HEK293 (cell line): ENCODE measurements at regions of chr18 and their contacts with region 1.

Region 1: GRCh38 chr18:50203801-50204604 is 9.1 kb upstream of the MYO5B start:
- H3K4me3 ChIP-seq: no peak overlapping the region
- H3K27ac ChIP-seq: no peak overlapping the region
- H3K4me1 ChIP-seq: no peaks in the 10 kb centered on the region
- CTCF ChIP-seq: peak; percentile 83

Region 2: DNA sequence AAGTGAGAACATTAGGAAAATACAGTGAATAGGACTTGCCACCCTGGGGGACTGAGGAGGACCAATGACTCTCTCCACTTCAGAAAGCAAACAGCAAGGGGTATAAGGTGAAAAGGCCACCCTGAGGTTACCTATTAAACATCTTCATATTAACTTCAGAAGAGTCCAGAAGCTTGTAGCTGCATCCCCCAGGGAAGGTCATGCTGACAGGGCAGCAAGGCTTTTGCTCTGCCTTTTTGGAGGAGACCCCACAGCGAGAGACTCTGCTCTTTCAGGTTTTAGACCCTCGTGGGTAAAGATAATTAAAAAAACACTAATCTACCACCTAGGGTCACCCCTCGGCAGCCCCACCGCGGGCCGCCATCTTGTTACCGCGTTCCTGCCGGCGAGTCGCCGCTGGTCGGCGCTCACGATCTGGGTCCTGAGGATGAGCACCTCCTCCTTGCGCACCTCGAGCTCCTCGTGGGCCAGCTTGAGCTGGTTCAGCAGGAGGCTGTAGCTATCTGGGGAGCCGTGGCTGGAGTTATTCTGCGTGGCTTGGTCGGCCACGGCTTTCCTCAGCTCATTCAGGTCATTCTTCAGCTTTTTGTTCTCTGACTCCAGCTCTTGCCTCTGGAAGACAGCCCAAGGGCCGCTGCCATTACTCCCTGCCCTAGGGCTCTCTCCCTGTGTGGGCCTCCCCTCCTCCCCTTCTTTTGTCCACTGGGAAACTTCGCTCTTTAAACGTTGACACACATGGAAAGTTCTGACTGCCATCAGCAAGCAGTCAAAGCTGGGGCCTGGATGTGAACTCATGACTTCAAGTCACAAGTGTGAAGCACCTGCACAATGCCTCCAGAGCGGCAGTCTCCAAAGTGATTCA is 340.0 kb before region 1 on chr18:
- CTCF ChIA-PET with region 1: interaction called, 30 read pairs
- POLR2A ChIA-PET with region 1: no interaction called
- H3K4me3 ChIP-seq: peak overlapping the region; percentile 14; the same call in 1 of the 2 replicates
- H3K27ac ChIP-seq: no peak overlapping the region; the same call in 1 of the 2 replicates
- H3K4me1 ChIP-seq: no peaks in the 10 kb centered on the region
- CTCF ChIP-seq: peak; percentile 71

Region 3: DNA sequence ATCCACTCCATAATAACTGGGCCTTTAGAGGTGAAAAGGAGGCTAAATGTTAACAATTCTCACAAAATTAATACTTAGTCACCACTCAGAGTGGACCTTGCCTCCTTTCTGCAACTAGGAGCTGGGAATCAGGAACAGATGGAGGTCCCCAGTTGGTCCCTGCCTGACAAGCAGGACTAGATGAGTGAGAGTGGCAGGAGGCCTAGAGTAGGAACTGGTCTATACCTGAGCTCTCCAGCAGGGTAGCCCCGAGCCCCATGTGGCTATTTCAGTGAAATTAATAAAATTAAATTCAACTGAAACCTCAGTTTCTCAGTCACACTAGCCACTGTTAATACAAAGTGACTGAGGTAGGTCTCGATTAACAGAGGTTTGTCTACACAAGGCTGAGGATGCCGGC is 159.6 kb before region 1 on chr18:
- CTCF ChIA-PET with region 1: interaction called, 20 read pairs
- POLR2A ChIA-PET with region 1: no interaction called
- H3K4me3 ChIP-seq: no peak overlapping the region
- H3K27ac ChIP-seq: no peak overlapping the region
- H3K4me1 ChIP-seq: no peaks in the 10 kb centered on the region
- CTCF ChIP-seq: no peak

Region 4: GRCh38 chr18:50051288-50051687 is 152.7 kb before region 1 on chr18:
- CTCF ChIA-PET with region 1: interaction called, 20 read pairs
- POLR2A ChIA-PET with region 1: no interaction called
- H3K4me3 ChIP-seq: no peak overlapping the region
- H3K27ac ChIP-seq: no peak overlapping the region
- H3K4me1 ChIP-seq: no peaks in the 10 kb centered on the region
- CTCF ChIP-seq: 0 out of 2 replicates have a peak, but pooled peaks have one; percentile 40

Region 5: GRCh38 chr18:50111265-50111792 is 92.7 kb before region 1 on chr18:
- CTCF ChIA-PET with region 1: interaction called, 13 read pairs
- POLR2A ChIA-PET with region 1: no interaction called
- H3K4me3 ChIP-seq: no peak overlapping the region
- H3K27ac ChIP-seq: no peak overlapping the region
- H3K4me1 ChIP-seq: peaks cover 15% of the 10 kb centered on the region
- CTCF ChIP-seq: no peak

Region 6: GRCh38 chr18:50218432-50219197 is 14.6 kb after region 1 on chr18:
- CTCF ChIA-PET with region 1: interaction called, 18 read pairs
- POLR2A ChIA-PET with region 1: no interaction called
- H3K4me3 ChIP-seq: no peak overlapping the region
- H3K27ac ChIP-seq: no peak overlapping the region
- H3K4me1 ChIP-seq: no peaks in the 10 kb centered on the region
- CTCF ChIP-seq: peak; percentile 63; the same call in 1 of the 2 replicates

Region 7: GRCh38 chr18:50231621-50232020 is 27.6 kb after region 1 on chr18:
- CTCF ChIA-PET with region 1: interaction called, 10 read pairs
- POLR2A ChIA-PET with region 1: no interaction called
- H3K4me3 ChIP-seq: no peak overlapping the region
- H3K27ac ChIP-seq: no peak overlapping the region
- H3K4me1 ChIP-seq: no peaks in the 10 kb centered on the region
- CTCF ChIP-seq: no peak